Tibial artery (tissue), 4 donors: ENCODE measurements at regions of chr18 and their contacts with region 1.

Region 1: GRCh38 chr18:36809590-36810381 is 19.0 kb downstream of the TPGS2 start:
- DNase-seq: peak in 1 of 2 donors; percentile 29
- H3K4me3 ChIP-seq: no peak overlapping the region
- H3K27ac ChIP-seq: no peak overlapping the region
- H3K4me1 ChIP-seq: peaks cover 0 to 6% (median 0%) of the 10 kb centered on the region in 4 donors
- H3K27me3 ChIP-seq: no peaks in the 10 kb centered on the region
- CTCF ChIP-seq: peak; percentile 71 to 84

Region 2: DNA sequence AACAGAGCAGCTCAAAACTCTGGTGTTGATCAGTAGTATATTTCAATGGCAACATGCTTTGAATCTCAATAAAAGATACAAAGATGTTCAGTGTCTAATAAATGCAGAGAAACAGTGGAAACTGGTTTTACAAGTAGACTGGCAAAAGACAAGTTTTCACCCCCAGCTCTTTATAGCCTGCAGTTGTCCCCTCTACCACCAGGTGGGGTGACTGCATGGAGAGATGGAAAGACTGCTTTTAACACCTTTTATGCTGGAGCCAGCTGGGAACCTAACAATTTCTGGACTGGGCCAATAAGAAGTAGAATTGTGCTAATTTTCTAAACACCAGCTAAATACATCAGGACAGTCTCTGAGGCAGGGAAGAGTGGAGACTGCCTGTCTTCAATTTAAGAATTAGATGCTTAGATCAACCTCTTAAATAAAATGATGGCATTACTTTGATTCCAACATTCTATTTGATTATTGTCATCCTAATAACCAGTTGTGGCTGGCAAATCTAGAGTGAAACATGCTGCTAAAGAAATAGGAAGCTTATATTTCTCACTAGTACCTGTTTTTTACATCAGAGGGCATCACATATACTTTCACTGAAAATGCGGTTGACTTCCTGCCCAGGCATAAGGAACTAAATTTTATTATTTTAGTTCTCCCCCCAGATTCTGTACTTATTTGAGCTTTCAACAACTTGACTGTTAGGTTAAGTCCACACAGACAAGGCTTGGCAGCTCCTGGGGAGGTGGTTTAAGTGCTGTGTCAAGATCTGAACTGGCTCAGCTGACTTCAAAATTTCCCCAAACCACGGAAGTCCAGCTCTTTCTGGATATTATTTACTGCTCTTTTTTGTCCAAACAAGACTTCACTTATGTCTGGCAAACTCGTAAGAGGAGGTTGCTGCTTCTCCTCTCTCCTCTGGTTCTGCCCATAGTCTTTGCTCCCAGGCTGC is 121.5 kb before region 1 on chr18:
- intact Hi-C with region 1: loop called (anchors 5 kb)
- DNase-seq: peak in 1 of 2 donors; percentile 79
- H3K4me3 ChIP-seq: no peak overlapping the region
- H3K27ac ChIP-seq: no peak overlapping the region
- H3K4me1 ChIP-seq: no peaks in the 10 kb centered on the region
- H3K27me3 ChIP-seq: no peaks in the 10 kb centered on the region
- CTCF ChIP-seq: peak; percentile 73 to 85

Region 3: GRCh38 chr18:36769611-36770314 is 40.0 kb before region 1 on chr18:
- intact Hi-C with region 1: loop called (anchors 5 kb)
- DNase-seq: no peak
- H3K4me3 ChIP-seq: no peak overlapping the region
- H3K27ac ChIP-seq: peak overlapping the region in 1 of 2 donors; percentile 3
- H3K4me1 ChIP-seq: no peaks in the 10 kb centered on the region
- H3K27me3 ChIP-seq: no peaks in the 10 kb centered on the region
- CTCF ChIP-seq: peak; percentile 42 to 47